Left cardiac atrium (tissue), 4 donors: ENCODE measurements at regions of chr17 and their contacts with region 1.

Region 1: GRCh38 chr17:21511363-21512198 is 135.4 kb downstream of the KCNJ12 start:
- DNase-seq: peak; percentile 89
- ATAC-seq: peak; percentile 95 to 97

Region 2: DNA sequence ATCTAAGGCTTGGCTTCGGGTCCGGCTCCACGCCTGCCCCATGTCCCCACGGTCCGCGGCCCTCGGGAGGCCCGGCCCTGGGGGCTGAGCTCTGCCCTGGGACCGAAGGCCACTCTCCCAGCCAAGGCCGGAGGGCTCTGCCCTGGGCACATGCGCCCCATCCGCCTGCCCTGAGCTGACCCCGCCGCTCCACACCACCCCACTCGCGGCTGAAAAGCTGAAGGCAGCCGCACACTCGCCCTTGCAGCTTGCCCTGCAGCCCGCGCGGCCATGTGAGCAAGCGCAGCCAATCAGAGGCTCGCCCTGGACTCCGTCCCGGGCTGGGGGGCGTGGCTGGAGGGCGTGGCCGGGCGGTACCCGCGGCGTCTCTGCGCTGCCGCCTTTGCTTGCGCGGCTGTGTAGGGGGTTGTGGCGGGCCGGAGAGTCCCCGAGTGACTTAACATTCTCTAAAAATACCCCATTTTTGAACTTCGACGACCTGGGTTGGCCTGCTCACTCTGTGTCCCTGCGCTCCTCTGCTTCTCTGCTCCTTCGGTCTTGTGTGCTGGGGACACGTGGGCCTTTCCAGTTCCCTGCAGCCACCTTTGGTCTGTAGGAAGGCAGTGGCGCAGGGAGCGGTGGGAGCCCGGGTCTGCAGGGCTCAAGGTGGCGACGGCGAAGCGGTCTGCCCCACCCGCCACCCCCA is 235.9 kb before region 1 on chr17:
- intact Hi-C with region 1: loop called in 1 of 2 experiments (anchors 5 kb)
- DNase-seq: peak; percentile 95
- ATAC-seq: peak; percentile 95 to 98

Region 3: GRCh38 chr17:21400816-21401593 is 110.6 kb before region 1 on chr17:
- intact Hi-C with region 1: no loop called
- DNase-seq: no peak
- ATAC-seq: no peak

Region 4: DNA sequence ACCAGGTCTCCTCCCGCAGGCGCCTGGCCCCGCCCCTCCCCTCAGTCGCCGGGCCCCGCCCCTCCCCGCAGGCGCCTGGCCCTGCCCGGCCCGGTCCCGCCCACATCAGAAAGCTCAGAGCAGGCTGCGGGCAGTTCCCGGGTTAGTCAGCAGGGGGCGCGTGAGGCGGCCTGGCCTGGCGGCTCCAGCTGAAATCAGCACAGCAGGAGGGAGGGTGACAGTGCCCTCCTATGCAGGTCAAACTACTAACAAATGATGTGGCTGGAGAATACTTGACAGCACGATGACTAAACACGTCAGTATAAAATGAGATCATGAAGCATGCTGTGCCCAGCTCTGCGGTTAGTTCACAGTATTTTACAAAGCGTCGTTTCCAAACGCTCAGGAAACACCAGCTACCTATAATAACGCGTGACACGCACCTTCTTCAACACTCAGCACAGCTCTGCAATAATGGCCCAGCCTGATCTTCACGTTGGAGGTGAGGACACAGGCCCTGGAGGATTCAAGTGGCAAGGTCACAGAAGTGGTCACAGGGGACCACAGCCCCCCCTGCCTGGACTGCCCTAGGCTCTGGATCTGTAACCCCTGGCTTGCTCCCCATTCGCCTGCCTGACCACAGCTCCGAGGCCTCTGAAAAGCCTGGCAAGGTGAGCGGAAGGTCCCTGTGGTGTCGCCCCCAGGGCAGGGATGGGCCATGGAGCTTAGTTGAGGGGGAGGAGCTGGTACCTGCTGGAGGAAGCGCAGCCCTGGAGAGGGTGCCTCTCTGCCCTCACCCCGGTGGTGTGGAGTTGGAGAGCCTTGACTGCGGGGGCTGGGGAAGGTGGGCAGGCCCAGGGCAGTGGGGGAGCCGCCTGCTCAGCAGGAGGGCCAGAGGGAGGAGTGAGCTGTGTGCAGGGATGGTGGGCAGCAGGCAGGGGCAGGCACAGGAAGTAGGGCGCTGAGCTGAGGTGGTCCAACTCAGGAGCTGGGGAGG is 54.2 kb before region 1 on chr17:
- intact Hi-C with region 1: loop called (anchors 1 to 5 kb)
- DNase-seq: peak; percentile 90
- ATAC-seq: peak; percentile 92 to 94

Region 5: DNA sequence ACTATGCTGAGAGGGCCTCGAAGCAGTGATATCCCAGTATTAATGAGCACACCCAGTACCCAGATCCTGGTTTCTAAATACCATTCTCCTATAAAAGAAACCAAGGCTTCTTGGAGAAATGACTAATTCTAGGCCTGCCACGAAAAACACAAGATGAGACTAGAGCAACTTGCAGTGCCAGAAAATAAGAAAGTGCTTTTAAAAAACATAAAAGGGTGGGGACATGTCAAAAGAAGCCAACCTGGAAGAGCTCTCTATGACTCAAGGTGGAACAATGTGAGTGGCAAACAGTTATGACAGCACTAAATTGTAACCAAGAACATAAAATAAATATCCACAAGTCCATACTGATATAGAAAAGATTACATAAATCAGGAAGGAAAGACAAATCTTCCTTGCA is 27.6 kb after region 1 on chr17:
- intact Hi-C with region 1: no loop called
- DNase-seq: no peak
- ATAC-seq: no peak